ENCODE measurements at regions of chr1 and their contacts with region 1.

Region 1: DNA sequence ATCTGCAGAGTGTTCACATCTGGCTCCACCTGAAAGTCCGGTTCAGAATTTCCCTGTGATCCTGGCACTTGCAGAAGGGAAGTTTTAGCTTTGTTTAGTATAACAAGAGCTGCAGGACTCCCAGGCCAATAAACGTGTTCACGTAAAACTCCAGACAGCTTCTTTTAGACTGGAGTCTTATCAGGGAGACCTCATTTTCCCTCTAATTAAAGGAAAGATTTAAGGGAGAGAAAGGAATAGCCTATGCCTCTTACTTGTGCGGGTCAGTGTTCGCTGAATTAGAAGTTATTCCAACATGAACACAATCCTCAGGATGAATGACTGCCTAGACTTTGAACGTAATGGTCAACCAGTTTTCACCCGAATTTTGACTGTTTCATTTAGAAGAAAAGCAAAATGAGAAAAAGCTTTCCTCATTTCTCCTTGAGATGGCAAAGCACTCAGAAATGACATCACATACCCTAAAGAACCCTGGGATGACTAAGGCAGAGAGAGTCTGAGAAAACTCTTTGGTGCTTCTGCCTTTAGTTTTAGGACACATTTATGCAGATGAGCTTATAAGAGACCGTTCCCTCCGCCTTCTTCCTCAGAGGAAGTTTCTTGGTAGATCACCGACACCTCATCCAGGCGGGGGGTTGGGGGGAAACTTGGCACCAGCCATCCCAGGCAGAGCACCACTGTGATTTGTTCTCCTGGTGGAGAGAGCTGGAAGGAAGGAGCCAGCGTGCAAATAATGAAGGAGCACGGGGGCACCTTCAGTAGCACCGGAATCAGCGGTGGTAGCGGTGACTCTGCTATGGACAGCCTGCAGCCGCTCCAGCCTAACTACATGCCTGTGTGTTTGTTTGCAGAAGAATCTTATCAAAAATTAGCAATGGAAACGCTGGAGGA is 202.1 kb upstream of the SGIP1 start:
- DNase-seq: peak; percentile 20 to 55 (median 39)
- ATAC-seq: peak; percentile 35
- H3K4me3 ChIP-seq: peak overlapping the region; percentile 86
- H3K4me3 Mint-ChIP-seq: peak overlapping the region; percentile 90 to 99 (median 98)
- H3K27ac ChIP-seq: peak overlapping the region; percentile 92
- H3K27ac Mint-ChIP-seq: peak overlapping the region; percentile 95 to 100 (median 98)
- H3K4me1 ChIP-seq: peaks cover 31 to 36% of the 10 kb centered on the region in 2 donors
- H3K4me1 Mint-ChIP-seq: peaks cover 26 to 76% (median 58%) of the 10 kb centered on the region in 7 donors
- H3K27me3 ChIP-seq: no peaks in the 10 kb centered on the region
- H3K27me3 Mint-ChIP-seq: no peaks in the 10 kb centered on the region

Region 2: GRCh38 chr1:65254319-65255034 is 1077.4 kb before region 1 on chr1:
- CTCF ChIA-PET with region 1: no interaction called
- POLR2A ChIA-PET with region 1: no interaction called
- intact Hi-C with region 1: loop called in 1 of 2 experiments (anchors 10 kb)
- DNase-seq: peak; percentile 70 to 90 (median 82)
- ATAC-seq: peak; percentile 97
- H3K4me3 ChIP-seq: peak overlapping the region; percentile 80
- H3K4me3 Mint-ChIP-seq: peak overlapping the region; percentile 87 to 99 (median 92)
- H3K27ac ChIP-seq: peak overlapping the region; percentile 69
- H3K27ac Mint-ChIP-seq: peak overlapping the region in 5 of 9 donors; percentile 10 to 93 (median 78)
- H3K4me1 ChIP-seq: peaks cover 10 to 14% of the 10 kb centered on the region in 2 donors
- H3K4me1 Mint-ChIP-seq: peaks cover 12 to 23% (median 18%) of the 10 kb centered on the region in 7 donors
- H3K27me3 ChIP-seq: no peaks in the 10 kb centered on the region
- H3K27me3 Mint-ChIP-seq: peaks cover 0 to 31% (median 10%) of the 10 kb centered on the region in 5 donors

Region 3: GRCh38 chr1:66182551-66183178 is 149.2 kb before region 1 on chr1:
- CTCF ChIA-PET with region 1: no interaction called
- POLR2A ChIA-PET with region 1: no interaction called
- intact Hi-C with region 1: loop called in 1 of 2 experiments (anchors 5 kb)
- DNase-seq: peak in 8 of 9 donors; percentile 15 to 69 (median 40)
- ATAC-seq: peak; percentile 82
- H3K4me3 ChIP-seq: no peak overlapping the region
- H3K4me3 Mint-ChIP-seq: peak overlapping the region in 5 of 10 donors; percentile 8 to 73 (median 24)
- H3K27ac ChIP-seq: no peak overlapping the region
- H3K27ac Mint-ChIP-seq: peak overlapping the region in 7 of 9 donors; percentile 7 to 81 (median 49)
- H3K4me1 ChIP-seq: peaks cover 0 to 10% of the 10 kb centered on the region in 2 donors
- H3K4me1 Mint-ChIP-seq: peaks cover 0 to 35% (median 22%) of the 10 kb centered on the region in 7 donors
- H3K27me3 ChIP-seq: no peaks in the 10 kb centered on the region
- H3K27me3 Mint-ChIP-seq: peaks cover 0 to 3% (median 0%) of the 10 kb centered on the region in 5 donors

Region 4: DNA sequence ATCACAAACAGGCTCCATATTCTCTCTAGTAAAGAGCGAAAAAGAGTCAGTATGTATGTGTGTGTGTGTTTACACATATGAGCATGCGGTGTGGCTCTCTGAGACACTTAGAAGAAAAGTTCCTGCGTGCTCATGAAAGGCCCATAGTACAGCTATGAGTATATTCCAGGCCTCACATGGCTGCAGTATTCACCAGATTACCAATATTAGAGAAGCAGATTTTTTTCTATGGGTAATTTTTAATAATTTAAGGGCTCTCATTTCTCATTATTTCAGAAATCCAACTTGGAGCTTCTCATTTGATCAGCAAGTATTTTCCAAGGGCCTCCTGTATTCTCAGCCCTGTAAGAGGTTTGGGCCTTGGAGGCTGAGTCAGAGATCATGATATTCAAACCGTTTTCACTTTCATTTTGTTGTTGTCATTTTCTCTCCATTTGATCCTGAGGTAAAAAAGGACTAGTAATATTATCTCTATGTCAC is 30.9 kb before region 1 on chr1:
- CTCF ChIA-PET with region 1: interaction called, 3 read pairs
- POLR2A ChIA-PET with region 1: interaction called, 32 read pairs
- intact Hi-C with region 1: loop called (anchors 1 kb)
- DNase-seq: peak in 7 of 9 donors; percentile 32 to 62 (median 45)
- ATAC-seq: peak; percentile 80
- H3K4me3 ChIP-seq: peak overlapping the region; percentile 12
- H3K4me3 Mint-ChIP-seq: peak overlapping the region; percentile 68 to 92 (median 85)
- H3K27ac ChIP-seq: peak overlapping the region; percentile 5
- H3K27ac Mint-ChIP-seq: peak overlapping the region; percentile 82 to 98 (median 91)
- H3K4me1 ChIP-seq: peaks cover 24 to 29% of the 10 kb centered on the region in 2 donors
- H3K4me1 Mint-ChIP-seq: peaks cover 12 to 46% (median 30%) of the 10 kb centered on the region in 7 donors
- H3K27me3 ChIP-seq: no peaks in the 10 kb centered on the region
- H3K27me3 Mint-ChIP-seq: peaks cover 0 to 3% (median 0%) of the 10 kb centered on the region in 5 donors

Region 5: DNA sequence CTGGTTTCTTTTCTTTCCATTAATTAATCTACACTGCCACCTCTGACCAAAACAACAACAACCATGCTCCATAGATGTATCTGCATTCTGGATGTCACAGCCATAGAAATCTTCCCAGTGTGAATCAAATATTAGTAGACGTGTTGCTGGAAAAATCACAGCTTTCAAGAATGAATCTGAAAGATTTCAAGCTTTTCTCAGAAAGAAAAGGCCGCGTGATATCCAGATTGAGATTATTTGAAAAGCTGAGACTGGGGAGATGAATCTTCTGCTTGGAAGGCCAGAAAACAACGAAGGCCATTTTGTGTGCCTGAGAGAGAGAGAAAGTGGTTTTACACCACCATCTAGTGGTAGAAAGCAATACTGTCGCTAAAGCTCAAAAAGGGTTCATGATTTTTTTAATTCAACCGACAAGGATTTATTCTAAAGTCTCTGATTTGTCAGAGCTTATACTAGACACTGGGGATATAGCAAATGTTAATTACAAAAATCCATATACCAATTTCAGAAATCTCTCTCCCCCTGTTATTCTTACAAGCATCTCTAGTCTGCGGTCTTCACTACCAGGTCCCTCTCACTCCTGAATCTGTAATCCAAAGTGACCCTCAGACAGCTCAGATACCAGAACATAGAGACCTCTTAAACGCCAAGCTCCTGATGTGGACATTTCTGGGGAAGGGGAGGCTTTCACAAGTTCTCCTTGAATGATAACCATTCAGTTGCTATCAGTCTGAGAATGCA is 114.5 kb after region 1 on chr1:
- CTCF ChIA-PET with region 1: interaction called, 38 read pairs
- POLR2A ChIA-PET with region 1: interaction called, 9 read pairs
- intact Hi-C with region 1: loop called (anchors 1 kb)
- DNase-seq: peak in 7 of 9 donors; percentile 45 to 82 (median 74)
- ATAC-seq: peak; percentile 85
- H3K4me3 ChIP-seq: no peak overlapping the region
- H3K4me3 Mint-ChIP-seq: peak overlapping the region in 9 of 10 donors; percentile 59 to 85 (median 74)
- H3K27ac ChIP-seq: peak overlapping the region; percentile 72
- H3K27ac Mint-ChIP-seq: peak overlapping the region; percentile 87 to 98 (median 94)
- H3K4me1 ChIP-seq: peaks cover 12 to 18% of the 10 kb centered on the region in 2 donors
- H3K4me1 Mint-ChIP-seq: peaks cover 18 to 32% (median 25%) of the 10 kb centered on the region in 7 donors
- H3K27me3 ChIP-seq: no peaks in the 10 kb centered on the region
- H3K27me3 Mint-ChIP-seq: peaks cover 0 to 20% (median 0%) of the 10 kb centered on the region in 5 donors

Region 6: GRCh38 chr1:67339623-67340343 is 1007.9 kb after region 1 on chr1:
- CTCF ChIA-PET with region 1: no interaction called
- POLR2A ChIA-PET with region 1: no interaction called
- intact Hi-C with region 1: loop called in 1 of 2 experiments (anchors 10 kb)
- DNase-seq: peak in 1 of 9 donors; percentile 41
- ATAC-seq: no peak
- H3K4me3 ChIP-seq: no peak overlapping the region
- H3K4me3 Mint-ChIP-seq: peak overlapping the region in 3 of 10 donors; percentile 1 to 61 (median 35)
- H3K27ac ChIP-seq: no peak overlapping the region
- H3K27ac Mint-ChIP-seq: peak overlapping the region in 1 of 9 donors; percentile 81
- H3K4me1 ChIP-seq: peaks cover 11 to 24% of the 10 kb centered on the region in 2 donors
- H3K4me1 Mint-ChIP-seq: peaks cover 30 to 81% (median 62%) of the 10 kb centered on the region in 7 donors
- H3K27me3 ChIP-seq: no peaks in the 10 kb centered on the region
- H3K27me3 Mint-ChIP-seq: no peaks in the 10 kb centered on the region